ENCODE measurements at regions of chr2 and their contacts with region 1.

Region 1: GRCh38 chr2:102187496-102188150 is 800 bp downstream of the IL1RL2 start:
- DNase-seq: peak; percentile 53 to 78 (median 58)
- H3K4me3 ChIP-seq: peak overlapping the region; percentile 15 to 59 (median 32)
- H3K27ac ChIP-seq: peak overlapping the region in 4 of 5 donors; percentile 48 to 76 (median 60)
- H3K4me1 ChIP-seq: peaks cover 0 to 5% of the 10 kb centered on the region in 2 donors
- H3K27me3 ChIP-seq: no peaks in the 10 kb centered on the region
- CTCF ChIP-seq: peak in 5 of 6 experiments; percentile 42 to 61 (median 57)
- POLR2A ChIP-seq: peak in 1 of 2 donors; percentile 24

Region 2: DNA sequence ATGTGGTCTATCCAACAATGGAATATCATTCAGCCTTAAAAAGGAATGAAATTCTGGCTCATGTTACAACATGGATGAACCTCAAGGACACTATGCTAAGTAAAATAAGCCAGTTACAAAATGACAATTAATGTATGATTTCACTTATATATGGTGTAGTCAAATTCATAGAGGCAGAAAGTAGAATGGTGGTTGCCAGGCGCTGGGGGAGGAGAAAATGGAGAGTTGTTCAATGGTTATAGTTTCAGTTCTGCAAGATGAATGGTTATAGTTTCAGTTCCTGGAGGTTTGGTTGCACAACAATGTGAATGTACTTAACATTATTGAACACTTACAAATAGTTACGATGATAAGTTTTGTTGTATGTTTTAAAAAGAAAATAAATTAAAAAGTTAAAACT is 275.1 kb before region 1 on chr2:
- intact Hi-C with region 1: no loop called
- DNase-seq: no peak
- H3K4me3 ChIP-seq: no peak overlapping the region
- H3K27ac ChIP-seq: no peak overlapping the region
- H3K4me1 ChIP-seq: no peaks in the 10 kb centered on the region
- H3K27me3 ChIP-seq: no peaks in the 10 kb centered on the region
- CTCF ChIP-seq: no peak
- POLR2A ChIP-seq: no peak

Region 3: GRCh38 chr2:102235491-102235890 is 47.9 kb after region 1 on chr2:
- intact Hi-C with region 1: loop called in 1 of 2 experiments (anchors 5 kb)
- DNase-seq: no peak
- H3K4me3 ChIP-seq: no peak overlapping the region
- H3K27ac ChIP-seq: no peak overlapping the region
- H3K4me1 ChIP-seq: peaks cover 0 to 4% of the 10 kb centered on the region in 2 donors
- H3K27me3 ChIP-seq: no peaks in the 10 kb centered on the region
- CTCF ChIP-seq: peak in 4 of 6 experiments; percentile 5 to 54 (median 35)
- POLR2A ChIP-seq: no peak

Region 4: DNA sequence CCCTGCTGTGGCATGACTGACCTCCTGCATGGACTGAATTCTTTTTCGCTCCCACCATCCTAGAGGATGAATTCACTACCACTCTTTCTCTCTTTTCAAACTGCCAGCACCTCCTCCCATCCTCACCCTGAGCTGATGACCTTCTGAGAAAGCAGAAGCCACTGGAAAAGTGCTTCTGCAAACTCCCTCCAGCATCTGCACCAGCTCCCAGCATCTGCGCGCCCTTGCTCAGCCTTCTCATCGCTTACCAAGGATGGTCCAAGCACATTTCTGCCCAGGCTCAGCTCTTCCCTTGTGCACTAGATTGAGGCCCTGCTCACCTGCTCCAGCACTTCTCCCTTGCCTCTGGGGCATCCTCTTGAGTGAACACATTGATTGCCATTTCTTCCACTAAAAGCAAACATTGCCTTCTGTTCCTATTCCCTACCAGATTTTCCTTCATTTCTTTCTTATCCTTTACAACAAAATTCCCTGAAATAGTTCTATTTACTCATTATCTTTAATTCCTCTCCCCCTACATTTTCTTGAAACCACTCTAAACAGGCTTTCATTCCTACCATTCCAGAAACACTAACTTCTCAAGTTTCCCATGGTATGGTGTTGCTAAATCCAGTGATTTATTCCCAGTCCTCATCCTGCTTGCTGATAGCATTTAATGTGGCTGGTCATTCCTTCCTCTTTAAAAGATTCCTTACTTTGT is 81.0 kb after region 1 on chr2:
- intact Hi-C with region 1: no loop called
- DNase-seq: no peak
- H3K4me3 ChIP-seq: no peak overlapping the region
- H3K27ac ChIP-seq: peak overlapping the region in 3 of 5 donors; percentile 33 to 73 (median 60)
- H3K4me1 ChIP-seq: peaks cover 0 to 6% of the 10 kb centered on the region in 2 donors
- H3K27me3 ChIP-seq: no peaks in the 10 kb centered on the region
- CTCF ChIP-seq: no peak
- POLR2A ChIP-seq: no peak

Measured in adrenal gland (tissue), 19 donors.